Activated CD4-positive, alpha-beta memory T cell treated with anti-CD3 and anti-CD28 coated beads for 36 hours (primary cell): ENCODE measurements at regions of chr2 and their contacts with region 1.

Region 1: DNA sequence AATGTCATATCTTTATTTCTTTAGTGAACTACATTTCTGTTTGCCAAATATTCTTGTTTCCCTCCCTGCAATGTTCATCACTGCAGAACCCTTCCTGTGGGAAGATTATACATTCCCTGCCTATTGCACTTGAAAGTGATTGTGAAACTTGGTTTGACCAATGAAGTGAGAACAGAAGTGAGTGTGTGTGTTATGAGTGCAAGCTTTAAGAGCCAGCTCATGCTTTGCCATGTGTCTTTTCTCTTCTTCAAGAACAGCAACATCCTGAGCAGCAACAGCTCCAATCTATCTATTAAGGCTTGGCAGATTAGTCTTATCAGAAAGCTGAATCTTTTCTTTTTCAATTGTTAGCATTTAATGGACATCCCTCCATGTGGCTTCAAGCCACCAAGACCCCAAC is 42.0 kb upstream of the UBE2E3 start:
- DNase-seq: no peak
- H3K4me3 Mint-ChIP-seq: no peak overlapping the region
- H3K27ac Mint-ChIP-seq: no peak overlapping the region
- H3K4me1 Mint-ChIP-seq: peaks cover 17% of the 10 kb centered on the region
- H3K27me3 Mint-ChIP-seq: peaks cover 4% of the 10 kb centered on the region

Region 2: GRCh38 chr2:180776921-180777320 is 161.5 kb before region 1 on chr2:
- CTCF ChIA-PET with region 1: no interaction called
- POLR2A ChIA-PET with region 1: no interaction called
- intact Hi-C with region 1: no loop called
- DNase-seq: no peak
- H3K4me3 Mint-ChIP-seq: no peak overlapping the region
- H3K27ac Mint-ChIP-seq: no peak overlapping the region
- H3K4me1 Mint-ChIP-seq: no peaks in the 10 kb centered on the region
- H3K27me3 Mint-ChIP-seq: no peaks in the 10 kb centered on the region

Region 3: GRCh38 chr2:180952082-180952481 is 13.6 kb after region 1 on chr2:
- CTCF ChIA-PET with region 1: interaction called, 3 read pairs
- POLR2A ChIA-PET with region 1: no interaction called
- intact Hi-C with region 1: loop called (anchors 1 kb)
- DNase-seq: no peak
- H3K4me3 Mint-ChIP-seq: no peak overlapping the region
- H3K27ac Mint-ChIP-seq: no peak overlapping the region
- H3K4me1 Mint-ChIP-seq: peaks cover 10% of the 10 kb centered on the region
- H3K27me3 Mint-ChIP-seq: peaks cover 14% of the 10 kb centered on the region